ENCODE measurements at regions of chr11 and their contacts with region 1.

Region 1: DNA sequence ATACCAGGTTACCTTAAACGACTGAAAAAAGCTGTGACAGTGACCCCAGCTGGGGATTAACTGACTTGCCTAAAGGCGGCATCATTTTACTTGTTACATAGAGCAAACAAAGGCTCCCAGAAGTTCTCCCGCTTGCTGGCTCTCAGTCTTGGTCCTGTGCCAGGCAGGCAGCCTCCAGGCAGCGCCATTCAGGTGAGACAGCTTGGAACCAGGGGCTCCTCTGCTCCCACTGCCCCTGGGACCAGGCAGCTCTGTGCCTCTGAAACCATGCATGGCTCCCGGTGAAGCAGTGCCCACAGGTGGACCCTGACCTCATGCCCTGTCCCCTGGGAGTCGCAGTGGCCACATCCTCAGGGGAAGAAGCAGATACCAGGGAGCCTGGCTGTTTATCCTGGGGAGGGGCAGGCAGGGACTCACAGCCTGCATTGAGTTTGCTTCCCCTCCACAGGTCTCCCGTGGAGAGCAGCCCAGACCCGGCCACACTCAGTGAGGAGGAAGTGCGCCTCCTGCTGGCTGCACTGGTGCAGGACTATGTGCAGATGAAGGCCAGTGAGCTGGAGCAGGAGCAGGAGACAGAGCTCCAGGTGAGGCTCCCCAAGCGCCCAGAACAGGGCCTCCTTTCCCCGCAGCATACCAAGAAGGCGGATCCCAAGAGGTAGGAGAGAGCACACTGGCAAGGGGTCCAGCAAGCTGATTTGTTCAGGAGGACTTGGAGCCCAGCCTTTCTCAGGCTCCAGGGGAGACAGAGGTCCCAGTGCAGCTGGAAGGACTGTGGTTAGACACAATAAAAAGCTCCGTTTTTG is 15.6 kb upstream of the CYP2R1 start:
- DNase-seq: peak; percentile 42
- H3K4me3 ChIP-seq: no peak overlapping the region
- H3K27ac ChIP-seq: no peak overlapping the region
- H3K4me1 ChIP-seq: peaks cover 16% of the 10 kb centered on the region
- H3K27me3 ChIP-seq: peaks cover 0 to 13% of the 10 kb centered on the region in 2 experiments
- CTCF ChIP-seq: peak; percentile 77 to 93
- POLR2A ChIP-seq: no peak

Region 2: DNA sequence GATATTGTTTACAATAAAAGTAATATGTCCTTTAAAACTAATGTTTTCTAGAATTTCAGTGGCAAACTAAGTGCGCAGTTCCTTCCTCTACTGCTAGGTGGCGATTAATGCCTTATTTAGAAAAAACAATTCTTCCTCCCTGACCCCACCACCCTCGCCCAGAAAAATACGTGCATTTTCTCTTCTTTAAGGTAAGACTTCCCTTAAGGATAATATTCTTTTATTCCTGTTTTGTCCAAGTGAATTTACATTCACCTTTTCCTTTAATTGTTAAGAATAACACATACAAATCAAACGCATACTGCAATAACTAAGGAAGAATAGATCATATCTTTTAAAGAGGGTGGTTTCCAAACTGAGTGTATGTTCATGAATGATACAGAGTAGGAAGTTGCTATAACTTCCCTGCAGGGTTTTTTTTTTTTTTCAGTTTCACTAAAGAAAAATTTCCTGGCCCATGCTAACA is 370.4 kb before region 1 on chr11:
- CTCF ChIA-PET with region 1: interaction called, 25 read pairs
- POLR2A ChIA-PET with region 1: no interaction called
- dilution Hi-C with region 1: no loop called
- intact Hi-C with region 1: loop called (anchors 1 kb)
- DNase-seq: peak; percentile 60
- H3K4me3 ChIP-seq: no peak overlapping the region
- H3K27ac ChIP-seq: no peak overlapping the region
- H3K4me1 ChIP-seq: no peaks in the 10 kb centered on the region
- H3K27me3 ChIP-seq: peaks cover 9 to 10% of the 10 kb centered on the region in 2 experiments
- CTCF ChIP-seq: peak; percentile 53 to 62
- POLR2A ChIP-seq: no peak

Region 3: DNA sequence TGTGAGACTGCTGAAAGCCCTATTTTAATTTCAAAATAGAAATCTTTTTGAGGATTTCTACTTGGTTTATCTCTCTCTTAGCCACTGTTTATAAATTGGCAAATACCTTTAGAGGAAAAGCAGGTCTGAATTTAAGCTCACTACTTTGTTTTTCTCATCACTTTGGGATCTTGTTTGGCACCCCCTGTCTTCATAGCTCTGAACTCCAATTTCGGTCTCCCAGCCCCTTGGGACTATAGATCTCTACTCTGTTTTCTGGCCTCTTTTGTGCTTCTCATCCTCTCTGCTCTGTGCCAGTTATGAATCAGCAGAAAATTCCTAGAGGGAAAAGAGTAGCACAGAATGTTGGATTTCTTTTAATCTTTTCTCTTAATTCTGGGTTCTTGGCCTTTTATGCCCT is 133.9 kb before region 1 on chr11:
- CTCF ChIA-PET with region 1: interaction called, 13 read pairs
- POLR2A ChIA-PET with region 1: no interaction called
- dilution Hi-C with region 1: no loop called
- intact Hi-C with region 1: no loop called
- DNase-seq: no peak
- H3K4me3 ChIP-seq: no peak overlapping the region
- H3K27ac ChIP-seq: no peak overlapping the region
- H3K4me1 ChIP-seq: no peaks in the 10 kb centered on the region
- H3K27me3 ChIP-seq: no peaks in the 10 kb centered on the region
- CTCF ChIP-seq: peak in 1 of 2 donors; percentile 1
- POLR2A ChIP-seq: no peak

Region 4: GRCh38 chr11:14861680-14862079 is 45.9 kb before region 1 on chr11:
- CTCF ChIA-PET with region 1: interaction called, 15 read pairs
- POLR2A ChIA-PET with region 1: no interaction called
- dilution Hi-C with region 1: no loop called
- intact Hi-C with region 1: no loop called
- DNase-seq: no peak
- H3K4me3 ChIP-seq: no peak overlapping the region
- H3K27ac ChIP-seq: no peak overlapping the region
- H3K4me1 ChIP-seq: no peaks in the 10 kb centered on the region
- H3K27me3 ChIP-seq: no peaks in the 10 kb centered on the region
- CTCF ChIP-seq: no peak
- POLR2A ChIP-seq: no peak

Region 5: DNA sequence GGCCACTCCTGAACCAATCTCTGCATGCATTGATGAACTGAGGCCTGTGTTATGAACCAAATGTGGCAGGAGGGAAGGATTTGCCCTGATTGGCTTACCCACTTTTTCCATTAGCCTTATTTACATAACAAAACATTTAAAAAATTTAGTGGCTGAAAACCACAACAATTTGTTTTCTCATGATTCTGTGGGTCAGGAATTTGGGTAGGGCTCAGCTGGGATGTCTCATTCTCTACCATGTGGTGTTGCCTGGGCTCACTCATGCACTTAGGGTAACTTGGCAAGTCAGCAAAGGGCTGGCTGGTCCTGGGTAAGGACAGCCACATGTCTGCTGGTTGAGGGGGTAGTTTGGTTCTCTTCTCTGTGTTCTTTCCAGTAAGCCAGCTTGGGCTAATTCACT is 19.5 kb after region 1 on chr11:
- CTCF ChIA-PET with region 1: interaction called, 42 read pairs
- POLR2A ChIA-PET with region 1: no interaction called
- dilution Hi-C with region 1: no loop called
- intact Hi-C with region 1: no loop called
- DNase-seq: no peak
- H3K4me3 ChIP-seq: no peak overlapping the region
- H3K27ac ChIP-seq: no peak overlapping the region
- H3K4me1 ChIP-seq: no peaks in the 10 kb centered on the region
- H3K27me3 ChIP-seq: no peaks in the 10 kb centered on the region
- CTCF ChIP-seq: no peak
- POLR2A ChIP-seq: no peak

Region 6: GRCh38 chr11:15074206-15075161 is 166.9 kb after region 1 on chr11:
- CTCF ChIA-PET with region 1: interaction called, 119 read pairs
- POLR2A ChIA-PET with region 1: no interaction called
- dilution Hi-C with region 1: no loop called
- intact Hi-C with region 1: loop called (anchors 1 kb)
- DNase-seq: peak; percentile 53
- H3K4me3 ChIP-seq: no peak overlapping the region
- H3K27ac ChIP-seq: no peak overlapping the region
- H3K4me1 ChIP-seq: no peaks in the 10 kb centered on the region
- H3K27me3 ChIP-seq: peaks cover 15 to 18% of the 10 kb centered on the region in 2 experiments
- CTCF ChIP-seq: peak; percentile 65 to 81
- POLR2A ChIP-seq: no peak

Region 7: DNA sequence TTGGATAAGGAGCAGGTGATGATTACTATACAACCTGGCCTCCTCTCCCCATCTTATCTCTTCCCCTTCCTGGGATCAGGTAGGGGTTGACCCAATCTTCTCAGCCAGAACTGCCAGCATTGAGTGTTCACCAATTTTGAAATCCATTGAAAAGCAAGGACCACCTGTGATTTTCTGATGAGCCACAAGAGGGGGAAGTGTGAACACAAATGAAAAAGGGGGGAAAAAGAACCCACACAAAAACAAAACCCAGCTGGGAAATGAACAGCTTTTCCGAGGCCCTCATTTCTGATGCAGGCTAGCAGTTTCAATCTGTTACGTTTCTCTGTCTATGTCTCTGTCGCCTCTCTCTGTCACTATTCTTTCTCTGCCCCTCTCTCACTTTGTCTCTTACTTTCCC is 369.0 kb after region 1 on chr11:
- CTCF ChIA-PET with region 1: no interaction called
- POLR2A ChIA-PET with region 1: no interaction called
- dilution Hi-C with region 1: no loop called
- intact Hi-C with region 1: no loop called
- DNase-seq: no peak
- H3K4me3 ChIP-seq: no peak overlapping the region
- H3K27ac ChIP-seq: no peak overlapping the region
- H3K4me1 ChIP-seq: no peaks in the 10 kb centered on the region
- H3K27me3 ChIP-seq: no peaks in the 10 kb centered on the region
- CTCF ChIP-seq: no peak
- POLR2A ChIP-seq: no peak